ENCODE measurements at regions of chr9 and their contacts with region 1.

Region 1: DNA sequence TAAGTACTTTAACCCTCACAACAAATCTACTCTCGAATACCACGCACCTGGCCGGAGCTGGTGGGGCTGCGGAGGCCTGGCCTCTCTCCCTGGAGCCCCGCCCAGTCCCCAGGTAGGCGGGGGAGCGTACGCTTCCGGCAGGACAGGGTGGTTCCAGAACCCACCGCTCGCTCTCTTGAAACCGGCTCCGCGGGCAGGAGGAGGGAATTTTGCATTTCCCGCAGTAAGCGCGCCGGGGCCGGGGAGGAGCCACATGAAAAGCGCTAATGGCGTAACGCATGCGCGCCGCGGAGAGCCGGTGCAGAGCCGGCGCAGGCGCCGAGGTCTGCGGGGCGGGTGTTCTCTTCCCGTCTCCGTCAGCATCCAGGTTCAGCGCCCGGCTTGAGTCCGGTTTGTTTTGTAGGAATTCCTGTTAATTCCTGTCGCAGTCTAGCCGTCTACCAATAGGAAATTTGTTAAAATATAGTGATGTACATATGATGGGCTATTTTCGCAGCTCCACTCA is 20.8 kb downstream of the CAVIN4 start:
- DNase-seq: peak; percentile 77
- H3K4me3 ChIP-seq: peak overlapping the region; percentile 40 to 70 (median 41)
- H3K27ac ChIP-seq: no peak overlapping the region
- H3K4me1 ChIP-seq: peaks cover 12% of the 10 kb centered on the region
- H3K27me3 ChIP-seq: no peaks in the 10 kb centered on the region
- CTCF ChIP-seq: no peak
- POLR2A ChIP-seq: peak; percentile 74

Region 2: GRCh38 chr9:100028201-100028784 is 570.4 kb before region 1 on chr9:
- CTCF ChIA-PET with region 1: interaction called, 3 read pairs
- POLR2A ChIA-PET with region 1: no interaction called
- dilution Hi-C with region 1: no loop called
- intact Hi-C with region 1: loop called (anchors 1 kb)
- DNase-seq: peak; percentile 87
- H3K4me3 ChIP-seq: no peak overlapping the region
- H3K27ac ChIP-seq: no peak overlapping the region
- H3K4me1 ChIP-seq: no peaks in the 10 kb centered on the region
- H3K27me3 ChIP-seq: no peaks in the 10 kb centered on the region
- CTCF ChIP-seq: peak; percentile 89 to 95
- POLR2A ChIP-seq: no peak

Region 3: DNA sequence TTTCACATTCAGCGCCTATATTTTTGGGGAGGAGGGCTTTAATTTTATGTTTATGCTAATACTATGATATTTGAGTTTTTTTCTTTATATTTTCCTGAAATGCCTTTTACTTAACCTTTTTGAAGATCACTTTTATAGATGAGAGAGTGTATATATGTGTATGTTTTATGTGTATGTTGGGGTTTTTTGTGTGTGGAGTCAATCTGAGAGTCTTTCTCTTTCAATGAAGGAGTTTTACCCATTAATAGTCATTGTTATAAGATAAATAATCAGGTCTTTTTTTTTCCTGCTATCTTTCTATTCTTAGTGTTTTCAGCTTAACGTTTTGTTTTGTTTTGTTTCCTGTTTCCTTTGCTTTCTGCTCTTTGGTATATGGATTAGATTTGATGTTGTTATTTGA is 358.2 kb before region 1 on chr9:
- CTCF ChIA-PET with region 1: no interaction called
- POLR2A ChIA-PET with region 1: no interaction called
- dilution Hi-C with region 1: no loop called
- intact Hi-C with region 1: no loop called
- DNase-seq: no peak
- H3K4me3 ChIP-seq: no peak overlapping the region
- H3K27ac ChIP-seq: no peak overlapping the region
- H3K4me1 ChIP-seq: no peaks in the 10 kb centered on the region
- H3K27me3 ChIP-seq: no peaks in the 10 kb centered on the region
- CTCF ChIP-seq: no peak
- POLR2A ChIP-seq: no peak

Region 4: GRCh38 chr9:100352727-100353505 is 245.8 kb before region 1 on chr9 and contains the start of gene TEX10:
- CTCF ChIA-PET with region 1: interaction called, 4 read pairs
- POLR2A ChIA-PET with region 1: no interaction called
- dilution Hi-C with region 1: no loop called
- intact Hi-C with region 1: loop called (anchors 2 kb)
- DNase-seq: peak; percentile 91
- H3K4me3 ChIP-seq: peak within 1 kb of the TSS; percentile 47 to 89 (median 88)
- H3K27ac ChIP-seq: peak within 1 kb of the TSS; percentile 69
- H3K4me1 ChIP-seq: peaks cover 10% of the 10 kb centered on the region
- H3K27me3 ChIP-seq: no peaks in the 10 kb centered on the region
- CTCF ChIP-seq: no peak
- POLR2A ChIP-seq: peak; percentile 59
- total RNA-seq, gene TEX10: 20.5 and 21.2 TPM in 2 replicates

Region 5: GRCh38 chr9:100619665-100620064 is 21.0 kb after region 1 on chr9:
- CTCF ChIA-PET with region 1: interaction called, 10 read pairs
- POLR2A ChIA-PET with region 1: no interaction called
- dilution Hi-C with region 1: no loop called
- intact Hi-C with region 1: no loop called
- DNase-seq: no peak
- H3K4me3 ChIP-seq: no peak overlapping the region
- H3K27ac ChIP-seq: no peak overlapping the region
- H3K4me1 ChIP-seq: no peaks in the 10 kb centered on the region
- H3K27me3 ChIP-seq: no peaks in the 10 kb centered on the region
- CTCF ChIP-seq: no peak
- POLR2A ChIP-seq: no peak

Region 6: DNA sequence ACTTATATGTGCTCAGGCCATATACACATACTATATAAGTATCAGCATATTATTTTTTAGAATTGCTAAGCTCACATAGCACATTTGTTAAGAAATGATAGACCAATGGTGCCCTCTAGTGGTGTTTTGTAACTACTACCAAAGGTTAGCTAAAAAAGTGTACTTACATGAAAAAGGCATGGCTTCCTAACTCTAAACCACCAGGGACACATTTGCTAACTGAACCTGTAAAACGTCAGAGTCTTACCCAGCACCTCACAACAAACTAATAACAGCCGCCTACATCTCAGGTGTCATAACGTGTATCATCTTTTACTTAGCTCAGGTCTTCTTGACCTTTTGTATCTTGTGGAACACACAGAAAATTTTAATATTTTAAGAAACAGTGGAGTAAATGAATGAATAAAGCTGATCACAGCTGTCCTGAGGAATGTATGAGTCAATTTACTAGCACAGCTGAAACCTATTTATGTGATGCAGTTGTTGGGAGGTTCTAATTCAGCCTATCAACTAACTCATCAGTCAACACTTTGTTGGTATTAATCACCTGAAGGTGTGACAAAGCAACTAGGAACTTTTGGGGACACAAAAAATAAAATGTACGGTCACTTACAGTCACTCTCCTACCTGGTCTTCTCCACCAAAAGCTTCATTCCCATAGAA is 713.2 kb after region 1 on chr9:
- CTCF ChIA-PET with region 1: interaction called, 428 read pairs
- POLR2A ChIA-PET with region 1: no interaction called
- dilution Hi-C with region 1: no loop called
- intact Hi-C with region 1: loop called (anchors 1 kb)
- DNase-seq: peak; percentile 76
- H3K4me3 ChIP-seq: no peak overlapping the region
- H3K27ac ChIP-seq: no peak overlapping the region
- H3K4me1 ChIP-seq: no peaks in the 10 kb centered on the region
- H3K27me3 ChIP-seq: peaks cover 0 to 4% of the 10 kb centered on the region in 2 experiments
- CTCF ChIP-seq: peak; percentile 24 to 33
- POLR2A ChIP-seq: no peak